ENCODE measurements at regions of chr3 and their contacts with region 1.

Region 1: GRCh38 chr3:115147329-115148141 is 447 bp upstream of the ZBTB20 start:
- DNase-seq: peak; percentile 92 to 100 (median 96)
- ATAC-seq: peak; percentile 71
- H3K4me3 ChIP-seq: peak overlapping the region; percentile 80 to 85
- H3K4me3 Mint-ChIP-seq: peak overlapping the region; percentile 88
- H3K27ac ChIP-seq: peak overlapping the region; percentile 96 to 97
- H3K27ac Mint-ChIP-seq: peak overlapping the region; percentile 100
- H3K4me1 ChIP-seq: peaks cover 15% of the 10 kb centered on the region
- H3K4me1 Mint-ChIP-seq: peaks cover 39% of the 10 kb centered on the region
- H3K27me3 ChIP-seq: no peaks in the 10 kb centered on the region
- H3K27me3 Mint-ChIP-seq: no peaks in the 10 kb centered on the region
- CTCF ChIP-seq: no peak

Region 2: DNA sequence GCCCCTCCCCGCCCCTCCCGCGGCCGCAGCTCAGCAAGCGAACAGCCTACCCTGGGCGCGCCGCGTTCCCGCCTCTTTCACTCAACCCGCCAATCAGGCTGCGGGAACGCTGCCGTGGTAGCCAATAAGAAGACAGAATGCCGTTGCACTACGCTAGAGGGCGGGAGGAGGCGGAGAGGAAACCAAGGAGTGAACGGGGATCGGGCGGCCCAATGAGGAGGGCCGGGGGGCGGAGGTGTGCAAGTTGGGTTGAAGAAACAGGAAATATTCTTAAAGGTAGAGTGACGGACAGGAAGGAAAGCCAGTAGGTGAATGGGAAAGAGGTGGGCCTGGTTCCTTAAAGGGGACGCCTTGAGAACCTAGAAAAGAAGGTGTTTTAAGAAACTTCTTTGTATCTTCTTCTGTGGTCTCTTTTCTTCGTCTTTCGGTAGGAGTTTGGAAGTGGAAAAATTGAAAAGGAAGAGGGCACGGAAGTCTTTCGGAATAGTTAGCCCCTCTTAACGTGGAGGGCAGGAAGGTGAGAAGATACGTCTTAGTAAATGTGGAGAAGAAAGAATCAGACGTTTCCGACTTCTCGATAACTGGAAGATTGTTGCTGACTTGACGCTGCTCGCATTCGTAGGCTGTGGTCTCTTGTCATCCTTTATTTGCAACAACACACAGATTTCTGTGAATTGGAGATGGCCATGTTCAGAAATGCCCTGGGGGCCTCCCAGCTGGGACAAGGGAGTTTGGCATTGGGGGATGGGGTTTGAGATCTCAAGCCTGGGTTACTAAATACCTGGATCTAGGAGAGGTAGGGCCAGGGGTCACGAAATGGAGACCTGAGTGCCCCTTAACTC is 1450.7 kb before region 1 on chr3:
- CTCF ChIA-PET with region 1: no interaction called
- POLR2A ChIA-PET with region 1: no interaction called
- intact Hi-C with region 1: loop called (anchors 1 to 5 kb)
- DNase-seq: peak; percentile 96 to 100 (median 99)
- ATAC-seq: peak; percentile 84
- H3K4me3 ChIP-seq: peak overlapping the region; percentile 69 to 86
- H3K4me3 Mint-ChIP-seq: no peak overlapping the region
- H3K27ac ChIP-seq: peak overlapping the region; percentile 88 to 89
- H3K27ac Mint-ChIP-seq: no peak overlapping the region
- H3K4me1 ChIP-seq: peaks cover 32% of the 10 kb centered on the region
- H3K4me1 Mint-ChIP-seq: peaks cover 28% of the 10 kb centered on the region
- H3K27me3 ChIP-seq: no peaks in the 10 kb centered on the region
- H3K27me3 Mint-ChIP-seq: no peaks in the 10 kb centered on the region
- CTCF ChIP-seq: no peak

Region 3: DNA sequence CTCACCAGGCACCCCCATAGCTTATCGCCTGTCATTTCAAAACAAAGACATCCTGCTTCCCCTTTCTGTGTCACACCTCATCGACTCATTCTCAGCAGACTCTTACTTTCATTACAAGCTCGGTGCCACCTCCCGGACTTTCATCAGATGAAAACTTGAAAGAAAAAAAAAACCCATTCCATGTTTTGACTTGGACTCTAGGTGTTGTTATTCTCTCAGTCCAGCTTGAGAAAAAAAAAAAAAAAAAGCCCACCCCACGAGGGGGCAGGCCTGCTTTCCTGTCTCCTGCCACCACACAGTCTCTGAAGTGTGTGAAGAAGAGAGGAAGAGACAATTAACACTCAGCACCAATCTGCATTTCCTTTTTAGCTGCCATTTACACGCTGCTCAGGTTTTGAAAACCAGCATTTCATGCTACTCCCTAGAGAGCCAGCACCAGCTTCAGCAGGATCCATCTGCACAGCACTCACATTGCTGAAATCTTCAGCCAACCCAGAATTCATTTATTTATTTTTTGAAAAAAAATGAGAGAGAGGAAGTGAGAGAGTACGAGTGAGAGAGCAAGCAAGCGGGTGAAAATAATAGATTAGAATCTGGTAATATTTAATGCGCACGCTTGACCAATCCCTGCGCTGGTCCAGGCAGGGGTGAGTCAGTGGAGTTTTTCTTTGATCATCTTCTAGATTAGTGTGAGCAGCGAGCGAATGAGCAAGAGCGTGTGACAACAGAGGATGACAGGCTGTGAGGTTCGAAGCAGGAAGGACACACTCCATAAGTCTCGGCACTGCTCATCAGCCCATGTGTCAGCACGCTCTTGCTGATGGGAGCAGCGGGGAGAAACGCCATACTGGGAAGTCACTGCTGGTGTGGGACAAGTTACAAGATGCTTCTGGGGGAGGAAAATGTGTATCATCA is 933.7 kb before region 1 on chr3:
- CTCF ChIA-PET with region 1: no interaction called
- POLR2A ChIA-PET with region 1: interaction called, 3 read pairs
- intact Hi-C with region 1: loop called in 1 of 2 experiments (anchors 2 kb)
- DNase-seq: peak; percentile 35 to 92 (median 74)
- ATAC-seq: peak; percentile 45
- H3K4me3 ChIP-seq: peak overlapping the region; percentile 55
- H3K4me3 Mint-ChIP-seq: no peak overlapping the region
- H3K27ac ChIP-seq: peak overlapping the region; percentile 91 to 96
- H3K27ac Mint-ChIP-seq: no peak overlapping the region
- H3K4me1 ChIP-seq: peaks cover 60% of the 10 kb centered on the region
- H3K4me1 Mint-ChIP-seq: peaks cover 3% of the 10 kb centered on the region
- H3K27me3 ChIP-seq: no peaks in the 10 kb centered on the region
- H3K27me3 Mint-ChIP-seq: no peaks in the 10 kb centered on the region
- CTCF ChIP-seq: peak; percentile 38

Region 4: GRCh38 chr3:115092220-115092791 is 55.2 kb before region 1 on chr3:
- CTCF ChIA-PET with region 1: interaction called, 16 read pairs
- POLR2A ChIA-PET with region 1: interaction called, 5 read pairs
- intact Hi-C with region 1: loop called in 1 of 2 experiments (anchors 2 kb)
- DNase-seq: peak; percentile 32 to 77 (median 65)
- ATAC-seq: peak; percentile 72
- H3K4me3 ChIP-seq: no peak overlapping the region
- H3K4me3 Mint-ChIP-seq: no peak overlapping the region
- H3K27ac ChIP-seq: no peak overlapping the region
- H3K27ac Mint-ChIP-seq: peak overlapping the region; percentile 8
- H3K4me1 ChIP-seq: no peaks in the 10 kb centered on the region
- H3K4me1 Mint-ChIP-seq: peaks cover 50% of the 10 kb centered on the region
- H3K27me3 ChIP-seq: no peaks in the 10 kb centered on the region
- H3K27me3 Mint-ChIP-seq: no peaks in the 10 kb centered on the region
- CTCF ChIP-seq: peak; percentile 89

Region 5: GRCh38 chr3:115120597-115120996 is 26.9 kb before region 1 on chr3:
- CTCF ChIA-PET with region 1: no interaction called
- POLR2A ChIA-PET with region 1: interaction called, 4 read pairs
- intact Hi-C with region 1: loop called in 1 of 2 experiments (anchors 2 kb)
- DNase-seq: no peak
- ATAC-seq: no peak
- H3K4me3 ChIP-seq: no peak overlapping the region
- H3K4me3 Mint-ChIP-seq: no peak overlapping the region
- H3K27ac ChIP-seq: no peak overlapping the region
- H3K27ac Mint-ChIP-seq: peak overlapping the region; percentile 52
- H3K4me1 ChIP-seq: no peaks in the 10 kb centered on the region
- H3K4me1 Mint-ChIP-seq: peaks cover 22% of the 10 kb centered on the region
- H3K27me3 ChIP-seq: no peaks in the 10 kb centered on the region
- H3K27me3 Mint-ChIP-seq: no peaks in the 10 kb centered on the region
- CTCF ChIP-seq: no peak

Region 6: GRCh38 chr3:115161866-115162265 is 14.3 kb after region 1 on chr3:
- CTCF ChIA-PET with region 1: interaction called, 15 read pairs
- POLR2A ChIA-PET with region 1: interaction called, 62 read pairs
- intact Hi-C with region 1: loop called (anchors 1 kb)
- DNase-seq: no peak
- ATAC-seq: no peak
- H3K4me3 ChIP-seq: no peak overlapping the region
- H3K4me3 Mint-ChIP-seq: no peak overlapping the region
- H3K27ac ChIP-seq: no peak overlapping the region
- H3K27ac Mint-ChIP-seq: no peak overlapping the region
- H3K4me1 ChIP-seq: peaks cover 26% of the 10 kb centered on the region
- H3K4me1 Mint-ChIP-seq: peaks cover 32% of the 10 kb centered on the region
- H3K27me3 ChIP-seq: no peaks in the 10 kb centered on the region
- H3K27me3 Mint-ChIP-seq: no peaks in the 10 kb centered on the region
- CTCF ChIP-seq: no peak

Region 7: DNA sequence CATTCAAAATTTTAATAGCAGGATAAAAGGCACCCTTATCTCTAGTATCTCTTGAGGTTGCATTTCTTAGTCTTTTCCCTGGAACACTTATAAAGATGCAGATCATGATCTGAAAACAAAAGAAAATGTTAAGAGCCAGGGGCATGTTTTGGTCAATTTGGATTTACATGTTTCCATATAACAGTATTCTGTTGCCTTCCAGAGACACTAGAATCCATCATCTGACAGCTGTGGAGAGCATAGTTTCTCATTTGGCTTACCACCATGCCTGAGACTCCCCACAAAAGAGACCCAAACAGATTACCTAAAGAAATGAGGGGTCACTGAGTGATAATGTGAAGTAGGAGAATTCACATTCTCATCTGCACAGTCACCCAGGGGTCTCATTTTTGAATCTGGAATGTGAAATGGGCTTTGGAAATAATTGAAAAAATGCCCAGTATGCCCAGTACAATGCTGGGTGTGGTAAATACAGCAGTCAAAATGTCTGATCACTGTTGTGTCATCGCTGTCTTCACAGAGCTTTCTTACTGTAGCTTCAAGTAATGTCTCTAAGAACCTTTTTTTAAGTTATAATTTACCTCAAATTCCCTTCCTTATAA is 79.4 kb after region 1 on chr3:
- CTCF ChIA-PET with region 1: no interaction called
- POLR2A ChIA-PET with region 1: no interaction called
- intact Hi-C with region 1: no loop called
- DNase-seq: no peak
- ATAC-seq: no peak
- H3K4me3 ChIP-seq: no peak overlapping the region
- H3K4me3 Mint-ChIP-seq: no peak overlapping the region
- H3K27ac ChIP-seq: no peak overlapping the region
- H3K27ac Mint-ChIP-seq: no peak overlapping the region
- H3K4me1 ChIP-seq: no peaks in the 10 kb centered on the region
- H3K4me1 Mint-ChIP-seq: no peaks in the 10 kb centered on the region
- H3K27me3 ChIP-seq: no peaks in the 10 kb centered on the region
- H3K27me3 Mint-ChIP-seq: no peaks in the 10 kb centered on the region
- CTCF ChIP-seq: no peak

Region 8: GRCh38 chr3:115658337-115659181 is 511.0 kb after region 1 on chr3:
- CTCF ChIA-PET with region 1: no interaction called
- POLR2A ChIA-PET with region 1: no interaction called
- intact Hi-C with region 1: loop called (anchors 2 kb)
- DNase-seq: peak; percentile 46 to 85 (median 78)
- ATAC-seq: peak; percentile 92
- H3K4me3 ChIP-seq: peak overlapping the region; percentile 83 to 84
- H3K4me3 Mint-ChIP-seq: peak overlapping the region; percentile 91
- H3K27ac ChIP-seq: peak overlapping the region; percentile 63 to 90
- H3K27ac Mint-ChIP-seq: peak overlapping the region; percentile 98
- H3K4me1 ChIP-seq: peaks cover 17% of the 10 kb centered on the region
- H3K4me1 Mint-ChIP-seq: peaks cover 25% of the 10 kb centered on the region
- H3K27me3 ChIP-seq: no peaks in the 10 kb centered on the region
- H3K27me3 Mint-ChIP-seq: no peaks in the 10 kb centered on the region
- CTCF ChIP-seq: no peak